ENCODE measurements at regions of chr14 and their contacts with region 1.

Region 1: DNA sequence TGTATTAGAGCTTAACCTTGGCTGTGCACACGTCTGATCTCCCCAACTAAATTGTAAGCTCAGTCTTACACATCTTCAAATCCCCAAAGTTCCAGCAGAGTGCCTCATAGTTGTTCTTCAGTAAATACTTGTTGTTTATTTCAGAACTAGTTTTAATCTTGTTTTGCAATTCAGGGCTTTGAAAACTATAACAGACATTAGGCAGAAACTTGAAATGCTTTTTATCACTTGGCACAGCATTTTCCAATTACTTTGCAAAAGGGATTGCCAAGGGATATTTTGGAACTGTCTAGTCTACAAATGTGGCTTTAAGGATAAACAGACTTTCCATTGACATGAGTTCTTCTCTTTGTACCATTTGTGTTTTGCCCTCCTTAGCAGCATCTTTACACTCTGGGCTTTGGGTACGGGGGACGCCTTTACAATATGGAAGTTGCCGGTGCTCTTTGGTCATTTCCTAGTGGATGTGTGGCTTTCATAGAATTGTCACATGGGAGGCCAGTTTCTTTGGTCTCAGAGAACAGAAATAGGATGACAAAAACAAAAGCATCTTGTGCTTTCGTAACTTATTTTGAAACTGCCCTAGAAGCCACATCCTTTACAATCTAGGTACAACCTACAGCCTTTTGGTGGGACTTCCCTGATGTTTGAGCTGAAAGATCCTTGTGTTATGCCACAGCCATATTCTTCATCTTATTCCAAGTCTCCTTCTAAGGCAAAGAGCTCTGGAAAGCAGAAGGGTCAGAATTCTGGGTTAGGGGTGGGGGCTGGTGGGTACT is 96.9 kb downstream of the NPAS3 start:
- DNase-seq: no peak
- CTCF ChIP-seq: no peak

Region 2: DNA sequence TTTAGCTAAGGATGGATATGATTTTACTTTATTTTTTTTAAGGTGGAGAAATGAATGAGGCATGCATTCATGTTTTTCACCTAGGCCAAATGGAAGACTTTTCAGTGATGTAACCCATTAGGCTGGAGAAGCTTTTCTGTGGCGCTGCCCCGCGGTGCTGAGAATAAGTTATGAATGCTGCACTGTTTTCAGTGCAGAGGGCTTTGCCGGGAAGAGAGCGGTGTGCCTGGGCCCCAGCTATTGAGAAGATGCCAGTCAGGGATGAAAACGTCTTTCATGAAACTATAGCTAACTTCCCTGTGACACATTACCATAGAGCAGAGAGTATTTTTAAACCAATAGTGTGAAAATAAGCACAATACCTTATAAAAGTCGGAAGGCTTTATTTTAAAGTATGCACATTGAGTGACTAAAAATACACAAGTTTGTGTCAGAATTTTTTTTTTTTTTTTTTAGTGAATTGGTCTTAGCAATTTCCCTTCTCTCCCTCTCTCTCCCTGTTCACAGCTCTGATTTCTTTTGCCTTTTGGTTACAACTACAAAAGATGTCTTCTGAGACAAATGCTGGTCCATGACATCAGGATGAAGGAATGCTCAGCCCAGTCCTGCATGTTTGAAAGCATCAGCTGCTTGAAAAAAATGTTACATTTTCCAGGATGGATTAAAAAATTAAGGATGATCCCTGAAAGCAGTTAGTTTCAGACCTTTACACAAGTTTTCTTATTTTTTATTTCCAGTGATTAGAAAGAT is 48.6 kb before region 1 on chr14:
- CTCF ChIA-PET with region 1: no interaction called
- POLR2A ChIA-PET with region 1: no interaction called
- DNase-seq: no peak
- CTCF ChIP-seq: no peak

Region 3: DNA sequence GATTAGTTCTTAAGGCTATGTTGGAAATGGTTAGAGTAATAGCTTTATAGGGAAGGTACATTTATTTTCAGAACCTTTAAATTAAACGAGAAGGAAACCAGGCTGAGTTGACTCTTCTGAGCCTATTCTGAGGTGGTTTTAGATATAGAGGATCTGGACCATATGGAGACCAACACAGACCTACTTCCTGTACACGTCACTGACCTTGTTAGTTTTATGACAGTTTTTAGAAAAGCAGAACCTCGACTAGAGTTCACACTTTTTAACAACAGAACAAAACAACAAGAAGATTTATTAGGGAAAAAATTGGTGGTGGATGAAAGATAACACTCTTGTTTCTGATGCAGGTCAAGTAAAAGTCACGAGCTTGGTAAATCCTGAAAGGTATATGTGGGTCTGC is 10.2 kb after region 1 on chr14:
- CTCF ChIA-PET with region 1: interaction called, 11 read pairs
- POLR2A ChIA-PET with region 1: no interaction called
- DNase-seq: no peak
- CTCF ChIP-seq: no peak